ENCODE measurements at regions of chr9 and their contacts with region 1.

Region 1: DNA sequence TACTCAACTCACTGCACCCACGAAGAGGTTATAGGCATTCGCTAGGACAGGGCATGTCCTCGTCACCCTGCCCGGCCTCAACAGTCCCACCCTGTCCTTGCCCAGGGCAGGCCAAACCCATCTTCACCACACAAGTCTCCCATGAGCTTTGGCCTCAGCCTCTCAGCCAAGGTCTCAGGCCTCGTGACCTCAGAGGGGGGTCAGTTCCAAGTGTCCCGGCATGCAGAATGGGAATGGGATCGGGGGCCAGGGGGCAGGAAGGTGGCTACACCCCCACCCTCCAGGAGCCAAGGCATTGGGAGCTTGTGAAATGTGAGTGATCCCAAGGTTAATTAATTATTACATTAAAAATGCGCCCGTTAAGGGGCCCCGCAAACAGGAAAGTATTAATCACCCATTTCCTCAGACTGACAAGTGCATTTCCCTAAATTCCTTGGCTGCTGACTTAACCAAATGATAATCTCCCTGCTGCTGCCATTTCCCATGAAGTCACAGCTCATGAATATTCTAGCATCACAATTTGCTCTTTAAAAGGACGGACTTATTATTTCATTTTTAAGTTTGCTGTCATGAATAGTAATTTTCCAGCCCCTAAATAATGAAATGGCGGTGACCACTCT is 8.0 kb upstream of the UBAC1 start:
- DNase-seq: no peak
- H3K4me3 ChIP-seq: no peak overlapping the region
- H3K27ac ChIP-seq: peak overlapping the region; percentile 24 to 39
- H3K4me1 ChIP-seq: no peaks in the 10 kb centered on the region
- H3K27me3 ChIP-seq: no peaks in the 10 kb centered on the region
- CTCF ChIP-seq: no peak
- POLR2A ChIP-seq: no peak

Region 2: GRCh38 chr9:135524130-135524861 is 444.9 kb before region 1 on chr9:
- intact Hi-C with region 1: no loop called
- DNase-seq: no peak
- H3K4me3 ChIP-seq: no peak overlapping the region
- H3K27ac ChIP-seq: no peak overlapping the region
- H3K4me1 ChIP-seq: no peaks in the 10 kb centered on the region
- H3K27me3 ChIP-seq: no peaks in the 10 kb centered on the region
- CTCF ChIP-seq: no peak
- POLR2A ChIP-seq: no peak

Region 3: GRCh38 chr9:135615666-135616618 is 353.2 kb before region 1 on chr9:
- intact Hi-C with region 1: no loop called
- DNase-seq: no peak
- H3K4me3 ChIP-seq: no peak overlapping the region
- H3K27ac ChIP-seq: no peak overlapping the region
- H3K4me1 ChIP-seq: no peaks in the 10 kb centered on the region
- H3K27me3 ChIP-seq: no peaks in the 10 kb centered on the region
- CTCF ChIP-seq: no peak
- POLR2A ChIP-seq: no peak

Region 4: DNA sequence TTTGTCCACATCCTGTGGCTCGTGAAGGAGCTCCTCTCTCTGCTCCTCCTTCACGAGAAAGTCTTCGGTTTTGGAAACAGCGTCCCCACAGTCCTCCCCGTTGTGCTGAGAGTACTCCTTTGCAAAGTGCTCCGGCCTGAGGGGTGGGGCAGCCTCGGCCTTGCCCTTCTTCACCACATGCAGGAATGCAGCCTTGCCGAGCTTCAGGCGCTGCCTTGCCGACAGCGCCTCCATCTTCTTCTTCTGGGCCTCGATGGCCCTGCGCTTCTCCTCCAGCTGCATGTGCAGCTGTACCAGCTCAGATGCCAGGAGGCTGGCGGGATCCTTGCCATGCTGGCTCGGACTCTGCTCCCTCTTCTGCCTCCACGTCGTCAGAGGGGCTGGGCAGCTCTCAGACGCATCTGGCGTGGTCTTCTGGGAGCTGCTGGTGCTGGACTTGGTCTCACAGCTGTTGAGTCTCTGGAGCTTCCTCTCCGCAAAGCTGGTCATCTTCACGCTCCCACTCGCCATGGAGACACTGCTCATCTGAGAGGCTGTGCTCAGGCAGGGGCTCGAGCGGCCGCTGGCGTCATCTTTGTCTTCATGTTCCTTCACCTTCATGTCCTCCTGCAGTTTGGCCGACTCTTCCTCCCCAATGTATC is 147.3 kb before region 1 on chr9:
- intact Hi-C with region 1: no loop called
- DNase-seq: no peak
- H3K4me3 ChIP-seq: no peak overlapping the region
- H3K27ac ChIP-seq: no peak overlapping the region
- H3K4me1 ChIP-seq: no peaks in the 10 kb centered on the region
- H3K27me3 ChIP-seq: no peaks in the 10 kb centered on the region
- CTCF ChIP-seq: no peak
- POLR2A ChIP-seq: no peak

Region 5: GRCh38 chr9:136122425-136123383 is 153.5 kb after region 1 on chr9:
- intact Hi-C with region 1: loop called (anchors 2 kb)
- DNase-seq: peak; percentile 70 to 74
- H3K4me3 ChIP-seq: no peak overlapping the region
- H3K27ac ChIP-seq: no peak overlapping the region
- H3K4me1 ChIP-seq: peaks cover 0 to 16% of the 10 kb centered on the region in 2 donors
- H3K27me3 ChIP-seq: no peaks in the 10 kb centered on the region
- CTCF ChIP-seq: peak; percentile 97 to 100 (median 99)
- POLR2A ChIP-seq: peak; percentile 19 to 34

Measured in uterus (tissue), 4 donors.